Heart left ventricle (tissue), 16 donors: ENCODE measurements at regions of chr17 and their contacts with region 1.

Region 1: GRCh38 chr17:77140166-77140878 is 447 bp upstream of the SEC14L1 start:
- DNase-seq: peak; percentile 99 to 100 (median 100)
- ATAC-seq: peak; percentile 98
- H3K4me3 ChIP-seq: peak overlapping the region; percentile 12 to 95 (median 76)
- H3K27ac ChIP-seq: peak overlapping the region; percentile 80 to 98 (median 94)
- H3K4me1 ChIP-seq: peaks cover 0 to 54% (median 11%) of the 10 kb centered on the region in 12 donors
- H3K27me3 ChIP-seq: no peaks in the 10 kb centered on the region
- CTCF ChIP-seq: peak in 1 of 12 donors; percentile 27
- POLR2A ChIP-seq: peak; percentile 86 to 97

Region 2: GRCh38 chr17:77109764-77110359 is 30.5 kb before region 1 on chr17:
- intact Hi-C with region 1: loop called in 1 of 10 experiments (anchors 5 kb)
- DNase-seq: peak in 1 of 5 donors; percentile 54
- ATAC-seq: peak; percentile 75 to 91 (median 85)
- H3K4me3 ChIP-seq: no peak overlapping the region
- H3K27ac ChIP-seq: peak overlapping the region; percentile 79 to 93 (median 86)
- H3K4me1 ChIP-seq: peaks cover 0 to 53% (median 24%) of the 10 kb centered on the region in 12 donors
- H3K27me3 ChIP-seq: no peaks in the 10 kb centered on the region
- CTCF ChIP-seq: peak in 3 of 12 donors; percentile 12 to 21 (median 17)
- POLR2A ChIP-seq: peak in 1 of 2 donors; percentile 32

Region 3: DNA sequence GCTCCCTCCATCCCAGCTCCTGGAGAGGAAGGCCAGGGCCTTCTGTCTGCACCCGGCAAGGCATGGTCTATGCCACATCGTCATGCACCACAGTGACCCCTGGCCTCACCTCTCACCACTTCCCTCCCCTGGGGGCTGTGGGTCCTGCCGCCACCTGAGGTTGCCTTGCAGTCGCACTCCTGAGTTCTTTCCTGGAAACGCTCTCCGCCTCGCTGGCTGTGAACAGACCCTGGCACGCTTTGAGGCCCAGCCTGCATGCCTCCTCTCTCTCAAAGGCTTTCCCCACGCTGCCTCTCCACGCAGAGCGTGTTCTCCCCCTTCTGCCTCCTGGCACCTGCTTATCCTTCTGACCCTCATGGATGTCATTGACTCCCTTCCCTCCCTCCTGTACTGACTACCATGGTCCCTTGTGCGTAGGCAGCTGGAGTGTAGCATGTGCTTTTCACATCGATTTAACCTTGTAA is 45.9 kb after region 1 on chr17:
- intact Hi-C with region 1: loop called in 4 of 10 experiments (anchors 5 kb)
- DNase-seq: peak in 3 of 5 donors; percentile 26 to 58 (median 44)
- ATAC-seq: peak; percentile 67 to 85 (median 76)
- H3K4me3 ChIP-seq: no peak overlapping the region
- H3K27ac ChIP-seq: peak overlapping the region in 11 of 12 donors; percentile 20 to 66 (median 44)
- H3K4me1 ChIP-seq: peaks cover 13 to 87% (median 71%) of the 10 kb centered on the region in 12 donors
- H3K27me3 ChIP-seq: no peaks in the 10 kb centered on the region
- CTCF ChIP-seq: no peak
- POLR2A ChIP-seq: no peak

Region 4: DNA sequence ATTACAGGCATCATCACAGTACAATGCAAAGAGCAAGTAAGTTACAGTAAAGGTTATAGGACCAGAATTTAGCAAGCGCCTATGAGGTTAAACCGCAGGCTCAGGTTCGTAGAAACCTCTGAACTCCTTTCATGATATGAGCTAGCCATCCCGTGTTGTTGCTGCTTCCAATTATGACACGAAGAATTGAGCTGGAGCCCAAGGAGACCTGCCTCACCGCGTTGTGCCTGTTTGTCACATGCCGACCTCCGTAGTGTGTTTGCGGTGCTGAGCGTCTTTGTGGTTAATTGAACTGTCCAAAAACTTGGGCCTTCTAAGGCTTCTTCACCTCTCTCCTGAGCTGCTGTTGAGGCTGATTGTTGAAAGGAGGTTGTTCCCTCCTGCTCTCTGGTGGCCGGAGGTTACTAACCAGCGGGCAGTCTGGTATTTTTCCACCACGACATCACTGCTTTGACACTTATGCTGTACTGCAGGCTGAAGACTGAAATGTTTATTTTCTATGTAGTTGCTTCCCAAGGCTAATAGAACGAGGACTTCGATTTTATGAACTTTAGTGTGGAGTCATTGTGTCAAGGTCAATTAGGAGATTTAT is 68.0 kb after region 1 on chr17:
- intact Hi-C with region 1: loop called in 7 of 10 experiments (anchors 5 to 10 kb)
- DNase-seq: peak in 4 of 5 donors; percentile 56 to 63 (median 58)
- ATAC-seq: peak; percentile 34 to 82 (median 72)
- H3K4me3 ChIP-seq: no peak overlapping the region
- H3K27ac ChIP-seq: peak overlapping the region; percentile 21 to 72 (median 55)
- H3K4me1 ChIP-seq: peaks cover 4 to 70% (median 35%) of the 10 kb centered on the region in 12 donors
- H3K27me3 ChIP-seq: no peaks in the 10 kb centered on the region
- CTCF ChIP-seq: peak in 10 of 12 donors; percentile 17 to 60 (median 35)
- POLR2A ChIP-seq: no peak

Region 5: GRCh38 chr17:77400445-77400870 is 260.1 kb after region 1 on chr17:
- intact Hi-C with region 1: no loop called
- DNase-seq: peak; percentile 67 to 82 (median 68)
- ATAC-seq: peak; percentile 64 to 78 (median 66)
- H3K4me3 ChIP-seq: peak overlapping the region in 2 of 12 donors; percentile 12 to 33
- H3K27ac ChIP-seq: peak overlapping the region in 11 of 12 donors; percentile 29 to 97 (median 52)
- H3K4me1 ChIP-seq: peaks cover 18 to 60% (median 34%) of the 10 kb centered on the region in 12 donors
- H3K27me3 ChIP-seq: no peaks in the 10 kb centered on the region
- CTCF ChIP-seq: peak; percentile 25 to 63 (median 50)
- POLR2A ChIP-seq: no peak